AG04450 (cell line): ENCODE measurements at regions of chr1 and their contacts with region 1.

Region 1: DNA sequence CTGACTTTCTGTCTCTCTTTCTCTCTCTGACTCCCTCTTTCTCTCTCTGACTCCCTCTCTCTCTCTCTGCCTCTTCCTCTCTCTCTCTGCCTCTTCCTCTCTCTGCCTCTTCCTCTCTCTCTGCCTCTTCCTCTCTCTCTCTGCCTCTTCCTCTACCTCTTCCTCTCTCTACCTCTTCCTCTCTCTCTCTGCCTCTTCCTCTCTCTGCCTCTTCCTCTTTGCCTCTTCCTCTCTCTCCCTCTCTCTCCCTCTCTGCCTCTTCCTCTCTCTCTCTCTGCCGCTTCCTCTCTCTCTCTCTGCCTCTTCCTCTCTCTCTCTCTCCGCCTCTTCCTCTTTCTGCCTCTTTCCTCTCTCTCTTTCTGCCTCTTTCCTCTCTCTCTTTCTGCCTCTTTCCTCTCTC is 18.6 kb upstream of the ANKRD45 start:
- DNase-seq: no peak
- H3K4me3 ChIP-seq: no peak overlapping the region
- H3K27ac ChIP-seq: no peak overlapping the region
- H3K27me3 ChIP-seq: no peaks in the 10 kb centered on the region
- CTCF ChIP-seq: no peak

Region 2: DNA sequence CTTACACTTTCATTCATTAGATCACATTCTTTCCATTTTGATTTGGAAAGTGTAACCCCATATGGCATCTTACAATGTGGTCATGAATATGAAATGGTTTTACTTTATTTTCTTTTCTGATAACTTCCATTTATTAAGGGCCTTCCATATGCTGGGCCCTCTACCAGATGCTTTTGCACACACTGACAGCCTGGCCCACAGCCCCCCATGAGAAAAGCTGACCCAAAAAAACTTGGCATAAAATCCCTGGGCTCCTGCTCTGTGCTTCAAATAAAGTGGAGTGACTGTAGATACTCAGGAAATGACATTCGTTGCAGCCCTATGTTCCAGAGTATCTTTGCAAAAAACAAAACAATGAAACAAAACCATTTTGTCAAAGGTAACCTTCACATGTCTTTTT is 162.4 kb before region 1 on chr1:
- CTCF ChIA-PET with region 1: interaction called, 10 read pairs
- POLR2A ChIA-PET with region 1: no interaction called
- DNase-seq: no peak
- H3K4me3 ChIP-seq: no peak overlapping the region
- H3K27ac ChIP-seq: no peak overlapping the region
- H3K27me3 ChIP-seq: peaks cover 5% of the 10 kb centered on the region
- CTCF ChIP-seq: no peak